Activated CD4-positive, alpha-beta memory T cell treated with anti-CD3 and anti-CD28 coated beads, Interleukin-2, amount 10 ng/mL, durations not matched to agents 7 days and 5 days (primary cell): ENCODE measurements at regions of chr14 and their contacts with region 1.

Region 1: DNA sequence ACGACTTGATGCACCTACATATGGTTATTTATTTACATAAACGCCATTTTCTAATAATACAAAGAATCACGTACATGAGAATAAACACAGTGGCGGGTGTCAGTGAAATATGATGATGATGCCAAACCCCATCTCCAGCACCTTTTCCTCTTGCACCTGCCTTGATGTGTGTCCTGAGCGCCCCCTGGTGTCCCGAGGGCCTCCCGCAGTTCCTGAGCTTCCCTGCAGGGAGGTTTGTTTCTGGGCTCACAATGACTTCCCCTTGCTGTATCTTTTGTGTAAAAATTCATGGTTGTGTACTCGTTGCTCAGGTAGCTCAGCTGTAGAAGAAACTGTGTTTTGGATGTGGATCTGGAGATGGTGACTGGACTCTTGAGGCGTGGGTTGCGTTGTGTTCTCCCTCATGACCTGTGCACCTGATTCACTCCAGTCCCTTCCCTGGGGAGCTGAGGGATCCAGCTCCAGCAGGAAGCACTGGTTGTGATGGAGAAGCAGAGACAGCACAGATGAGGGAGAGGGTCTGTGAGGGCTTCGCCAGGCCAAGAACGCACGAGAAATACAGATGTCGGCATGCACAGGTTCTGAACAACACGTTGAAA is 1037.8 kb downstream of the TMEM121 start:
- DNase-seq: peak; percentile 71
- H3K4me3 Mint-ChIP-seq: no peak overlapping the region
- H3K27ac Mint-ChIP-seq: no peak overlapping the region
- H3K4me1 Mint-ChIP-seq: no peaks in the 10 kb centered on the region
- H3K27me3 Mint-ChIP-seq: peaks cover 54% of the 10 kb centered on the region

Region 2: DNA sequence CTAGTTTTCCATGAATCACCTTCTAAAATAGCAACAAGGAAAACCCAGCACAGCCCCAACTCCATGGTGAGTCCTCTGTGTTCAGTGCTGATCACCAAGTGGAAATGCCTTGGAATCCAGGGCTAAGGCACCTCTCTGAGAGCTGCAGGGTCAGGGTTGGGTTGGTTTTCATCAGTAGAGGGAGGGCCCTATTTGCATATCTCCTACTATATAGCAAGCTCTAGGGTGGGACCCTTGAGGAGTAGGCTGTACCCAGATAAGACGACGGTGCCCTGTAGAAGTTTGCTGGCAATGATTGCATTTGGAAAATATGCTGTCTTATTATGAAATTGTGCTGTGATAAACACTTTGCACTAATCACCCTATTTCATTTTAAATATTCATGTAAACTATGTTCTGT is 26.0 kb before region 1 on chr14:
- CTCF ChIA-PET with region 1: interaction called, 35 read pairs
- POLR2A ChIA-PET with region 1: no interaction called
- DNase-seq: no peak
- H3K4me3 Mint-ChIP-seq: no peak overlapping the region
- H3K27ac Mint-ChIP-seq: no peak overlapping the region
- H3K4me1 Mint-ChIP-seq: peaks cover 5% of the 10 kb centered on the region
- H3K27me3 Mint-ChIP-seq: peaks cover 46% of the 10 kb centered on the region

Region 3: GRCh38 chr14:106551263-106551662 is 12.9 kb before region 1 on chr14:
- CTCF ChIA-PET with region 1: interaction called, 15 read pairs
- POLR2A ChIA-PET with region 1: no interaction called
- DNase-seq: no peak
- H3K4me3 Mint-ChIP-seq: no peak overlapping the region
- H3K27ac Mint-ChIP-seq: no peak overlapping the region
- H3K4me1 Mint-ChIP-seq: peaks cover 12% of the 10 kb centered on the region
- H3K27me3 Mint-ChIP-seq: peaks cover 11% of the 10 kb centered on the region

Region 4: GRCh38 chr14:106642090-106642489 is 77.9 kb after region 1 on chr14:
- CTCF ChIA-PET with region 1: no interaction called
- POLR2A ChIA-PET with region 1: no interaction called
- DNase-seq: no peak
- H3K4me3 Mint-ChIP-seq: no peak overlapping the region
- H3K27ac Mint-ChIP-seq: no peak overlapping the region
- H3K4me1 Mint-ChIP-seq: peaks cover 2% of the 10 kb centered on the region
- H3K27me3 Mint-ChIP-seq: peaks cover 19% of the 10 kb centered on the region